HAP-1 (cell line): ENCODE measurements at regions of chr1 and their contacts with region 1.

Region 1: DNA sequence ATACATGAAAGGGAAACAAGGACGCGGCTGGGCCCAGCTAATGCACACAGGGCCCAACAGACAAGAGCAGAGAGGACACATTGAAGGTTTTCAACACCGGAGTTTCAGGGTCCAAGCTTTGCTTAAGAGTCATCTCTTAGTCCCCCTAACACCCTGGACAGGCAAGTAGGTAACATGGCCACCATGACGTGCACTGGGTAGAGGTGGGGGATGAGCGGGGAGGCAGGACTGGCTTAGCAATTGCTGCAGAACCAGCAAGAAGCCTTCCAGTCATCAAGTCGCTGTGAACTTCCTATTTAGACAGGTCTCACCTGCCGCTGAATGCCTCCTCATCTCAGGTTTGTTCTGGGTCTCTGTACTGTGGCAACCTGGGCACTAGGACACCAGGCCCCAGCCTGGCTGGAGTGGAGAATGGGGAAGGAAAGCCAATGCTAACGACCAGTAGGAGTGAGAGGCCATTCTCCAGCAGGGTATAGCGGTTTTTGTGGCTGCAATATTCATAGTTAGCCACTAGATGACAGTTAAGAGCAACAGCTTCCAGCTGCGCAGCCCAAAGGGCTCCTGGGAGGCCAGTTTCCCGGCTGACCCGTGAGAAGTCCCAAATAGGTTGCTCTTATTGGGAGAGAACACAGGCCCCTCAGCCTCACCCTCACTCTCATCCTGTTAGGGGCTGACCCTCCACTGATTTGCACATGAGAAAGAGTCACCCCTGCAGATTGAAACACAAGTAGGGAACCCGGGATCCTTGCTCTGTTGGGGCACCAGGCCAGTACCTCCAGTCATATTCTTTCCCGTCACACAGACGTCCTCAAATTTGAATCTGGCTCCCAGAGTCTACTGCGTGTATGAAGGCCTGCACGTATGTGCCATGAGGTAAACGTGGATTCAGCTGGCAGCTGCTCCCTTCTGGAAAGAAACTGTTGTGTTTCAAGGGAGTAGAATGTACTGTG is 6.0 kb upstream of the PIGC start:
- DNase-seq: peak; percentile 57 to 72
- H3K4me3 ChIP-seq: no peak overlapping the region
- H3K4me1 ChIP-seq: no peaks in the 10 kb centered on the region
- H3K27me3 ChIP-seq: no peaks in the 10 kb centered on the region

Region 2: DNA sequence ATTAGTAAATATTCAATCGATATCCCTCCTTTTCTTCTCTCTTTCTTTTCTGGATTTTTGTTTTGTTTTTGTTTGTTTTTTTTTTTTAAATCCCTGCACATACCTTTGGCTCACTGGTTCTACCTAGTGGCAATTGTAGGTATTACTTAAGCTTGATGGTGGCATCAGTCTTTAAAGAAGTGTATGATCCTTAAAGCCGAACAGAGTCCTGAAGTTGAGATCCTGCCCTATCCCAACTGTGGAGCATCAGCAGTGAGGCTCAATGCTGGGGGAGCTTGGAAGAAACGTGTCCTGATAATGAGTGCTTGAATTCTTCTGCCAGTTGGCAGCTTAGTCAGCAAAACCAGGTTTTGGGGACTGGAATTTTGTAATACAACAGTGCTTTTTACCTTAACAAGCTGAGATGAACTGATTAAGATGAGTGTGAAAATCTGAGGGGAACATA is 269.9 kb after region 1 on chr1:
- in situ Hi-C with region 1: loop called (anchors 10 kb)
- DNase-seq: no peak
- H3K4me3 ChIP-seq: no peak overlapping the region
- H3K4me1 ChIP-seq: no peaks in the 10 kb centered on the region
- H3K27me3 ChIP-seq: peaks cover 8% of the 10 kb centered on the region